ENCODE measurements at regions of chr15 and their contacts with region 1.

Region 1: GRCh38 chr15:60507596-60508424 is 28.9 kb upstream of the ICE2 start:
- DNase-seq: peak in 12 of 14 experiments; percentile 14 to 89 (median 43)
- ATAC-seq: peak; percentile 87
- H3K4me3 ChIP-seq: no peak overlapping the region
- H3K4me3 Mint-ChIP-seq: peak overlapping the region; percentile 1
- H3K27ac ChIP-seq: peak overlapping the region in 1 of 2 donors; percentile 14
- H3K27ac Mint-ChIP-seq: peak overlapping the region; percentile 84
- H3K4me1 ChIP-seq: peaks cover 19% of the 10 kb centered on the region
- H3K4me1 Mint-ChIP-seq: peaks cover 58% of the 10 kb centered on the region
- H3K27me3 ChIP-seq: no peaks in the 10 kb centered on the region
- H3K27me3 Mint-ChIP-seq: no peaks in the 10 kb centered on the region
- CTCF ChIP-seq: peak; percentile 87

Region 2: DNA sequence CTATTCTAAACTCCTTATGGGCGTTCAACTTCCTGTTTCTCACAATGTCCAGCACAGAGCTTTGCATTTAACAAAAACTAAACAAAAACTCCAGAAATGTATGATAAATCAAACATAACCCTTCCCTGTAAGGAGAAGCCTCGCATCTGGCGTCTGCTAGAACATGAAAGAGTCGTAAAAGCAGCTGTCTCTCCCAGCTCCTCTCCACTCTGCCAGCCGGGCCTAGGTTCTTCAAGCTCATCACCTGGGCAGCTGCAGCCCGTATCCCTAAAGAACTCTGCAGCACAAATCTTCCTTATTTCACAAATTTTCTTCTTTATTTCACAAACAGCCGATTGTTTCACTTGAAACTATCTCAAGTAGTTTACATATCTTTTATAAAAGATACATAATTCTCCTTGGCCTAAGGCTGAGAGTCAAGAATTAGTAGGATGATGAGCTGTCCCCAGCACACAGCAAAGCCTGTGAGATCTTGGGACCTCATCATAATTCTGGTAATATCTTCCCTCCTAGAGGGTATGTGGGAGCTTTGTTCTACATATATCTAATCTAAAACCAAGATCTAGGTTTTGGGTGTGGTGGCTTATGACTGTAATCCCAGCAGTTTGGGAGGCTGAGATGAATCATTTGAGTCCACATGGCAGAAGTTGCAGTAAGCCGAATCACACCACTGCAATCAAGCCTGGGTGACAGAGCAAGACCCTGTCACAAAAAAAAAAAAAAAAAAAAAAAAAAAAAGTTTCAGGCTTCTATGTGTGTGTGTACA is 145.3 kb before region 1 on chr15:
- CTCF ChIA-PET with region 1: no interaction called
- POLR2A ChIA-PET with region 1: no interaction called
- intact Hi-C with region 1: loop called in 1 of 2 experiments (anchors 5 kb)
- DNase-seq: peak in 5 of 14 experiments; percentile 6 to 50 (median 25)
- ATAC-seq: peak; percentile 75
- H3K4me3 ChIP-seq: no peak overlapping the region
- H3K4me3 Mint-ChIP-seq: no peak overlapping the region
- H3K27ac ChIP-seq: no peak overlapping the region
- H3K27ac Mint-ChIP-seq: peak overlapping the region; percentile 62
- H3K4me1 ChIP-seq: peaks cover 15% of the 10 kb centered on the region
- H3K4me1 Mint-ChIP-seq: peaks cover 19% of the 10 kb centered on the region
- H3K27me3 ChIP-seq: no peaks in the 10 kb centered on the region
- H3K27me3 Mint-ChIP-seq: no peaks in the 10 kb centered on the region
- CTCF ChIP-seq: no peak

Region 3: DNA sequence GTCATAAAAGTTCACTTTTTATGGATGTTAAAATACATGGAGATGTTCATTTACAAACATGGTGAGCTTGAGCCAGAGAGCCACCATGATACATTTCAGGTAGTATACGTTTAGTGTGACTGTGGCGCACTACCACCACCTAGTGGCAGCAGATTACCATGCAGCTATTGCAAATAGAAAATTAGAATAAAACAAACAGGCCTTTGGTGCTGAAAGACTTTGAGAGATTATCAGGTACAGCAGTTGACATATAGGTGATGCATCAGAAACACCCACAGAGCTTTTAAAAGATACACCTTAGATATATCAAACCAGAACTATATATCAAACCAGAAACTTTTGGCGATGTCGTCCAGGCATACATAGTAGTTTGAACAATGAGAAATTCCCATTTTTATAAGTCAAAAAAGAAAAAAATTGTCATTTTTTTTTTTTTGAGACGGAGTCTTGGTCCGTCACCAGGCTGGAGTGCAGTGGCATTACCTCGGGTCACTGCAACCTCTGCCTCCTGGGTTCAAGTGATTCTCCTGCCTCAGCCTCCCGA is 13.1 kb after region 1 on chr15:
- CTCF ChIA-PET with region 1: interaction called, 37 read pairs
- POLR2A ChIA-PET with region 1: interaction called, 22 read pairs
- intact Hi-C with region 1: loop called in 1 of 2 experiments (anchors 1 kb)
- DNase-seq: peak; percentile 68 to 89 (median 78)
- ATAC-seq: peak; percentile 88
- H3K4me3 ChIP-seq: no peak overlapping the region
- H3K4me3 Mint-ChIP-seq: no peak overlapping the region
- H3K27ac ChIP-seq: no peak overlapping the region
- H3K27ac Mint-ChIP-seq: peak overlapping the region; percentile 65
- H3K4me1 ChIP-seq: peaks cover 22% of the 10 kb centered on the region
- H3K4me1 Mint-ChIP-seq: peaks cover 66% of the 10 kb centered on the region
- H3K27me3 ChIP-seq: no peaks in the 10 kb centered on the region
- H3K27me3 Mint-ChIP-seq: no peaks in the 10 kb centered on the region
- CTCF ChIP-seq: peak; percentile 92

Region 4: DNA sequence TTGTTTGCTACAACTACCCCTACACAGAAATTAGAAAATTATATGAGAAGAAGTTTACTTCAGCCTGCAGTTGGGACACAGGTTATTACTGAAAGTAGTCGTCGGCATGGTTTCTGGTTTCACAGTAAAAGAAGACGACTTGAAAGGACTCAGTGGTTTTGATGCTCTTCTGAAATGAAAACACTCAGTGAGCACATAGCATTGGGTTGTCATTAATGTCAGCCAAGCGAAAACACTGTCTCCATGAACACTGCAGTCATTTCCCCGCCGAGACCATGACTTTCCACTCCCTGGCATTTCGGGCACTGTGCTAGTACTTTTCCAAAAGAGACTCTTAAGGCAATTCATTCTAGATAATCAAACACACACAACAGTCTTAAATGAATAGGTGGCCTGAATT is 40.3 kb after region 1 on chr15:
- CTCF ChIA-PET with region 1: interaction called, 8 read pairs
- POLR2A ChIA-PET with region 1: interaction called, 5 read pairs
- intact Hi-C with region 1: loop called in 1 of 2 experiments (anchors 5 kb)
- DNase-seq: peak in 5 of 14 experiments; percentile 34 to 69 (median 65)
- ATAC-seq: peak; percentile 57
- H3K4me3 ChIP-seq: peak overlapping the region; percentile 27
- H3K4me3 Mint-ChIP-seq: peak overlapping the region; percentile 71
- H3K27ac ChIP-seq: peak overlapping the region; percentile 2 to 65
- H3K27ac Mint-ChIP-seq: peak overlapping the region; percentile 85
- H3K4me1 ChIP-seq: peaks cover 74% of the 10 kb centered on the region
- H3K4me1 Mint-ChIP-seq: peaks cover 94% of the 10 kb centered on the region
- H3K27me3 ChIP-seq: no peaks in the 10 kb centered on the region
- H3K27me3 Mint-ChIP-seq: no peaks in the 10 kb centered on the region
- CTCF ChIP-seq: no peak

Region 5: DNA sequence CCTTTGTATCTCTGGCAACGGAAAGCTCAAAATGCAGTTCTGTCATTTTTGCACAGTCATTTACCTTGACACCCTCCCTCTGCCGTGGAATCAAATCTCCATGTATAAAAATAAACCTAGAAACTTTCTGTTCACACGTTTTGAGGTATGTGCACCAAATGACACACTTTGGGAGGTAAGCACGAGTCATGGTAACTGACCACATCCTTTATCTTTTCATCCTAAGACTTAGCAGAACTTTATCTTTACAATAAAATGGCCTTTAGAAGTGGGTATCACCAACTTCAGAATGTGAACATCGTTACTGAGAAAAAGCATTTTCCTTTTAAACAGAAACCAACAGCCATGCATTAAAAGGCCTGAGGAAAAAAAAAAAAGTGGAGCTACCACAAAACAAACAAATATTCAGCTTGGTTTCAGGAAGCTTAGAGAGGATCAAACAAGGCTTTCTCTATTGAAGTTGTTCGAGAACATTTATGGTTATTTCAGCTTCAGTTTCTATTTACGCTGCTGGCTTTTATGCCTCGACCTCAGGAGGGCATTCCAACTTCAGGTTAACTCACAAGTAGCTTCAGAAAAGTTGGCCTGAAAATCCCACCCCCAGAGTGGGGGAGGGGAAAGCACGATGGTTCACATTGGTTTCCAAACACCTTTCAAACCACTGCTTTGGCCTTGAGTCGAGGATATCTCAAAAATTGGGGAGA is 142.2 kb after region 1 on chr15:
- CTCF ChIA-PET with region 1: no interaction called
- POLR2A ChIA-PET with region 1: no interaction called
- intact Hi-C with region 1: no loop called
- DNase-seq: peak in 9 of 14 experiments; percentile 4 to 87 (median 11)
- ATAC-seq: peak; percentile 84
- H3K4me3 ChIP-seq: peak overlapping the region; percentile 15
- H3K4me3 Mint-ChIP-seq: peak overlapping the region; percentile 58
- H3K27ac ChIP-seq: peak overlapping the region in 1 of 2 donors; percentile 59
- H3K27ac Mint-ChIP-seq: peak overlapping the region; percentile 79
- H3K4me1 ChIP-seq: peaks cover 30% of the 10 kb centered on the region
- H3K4me1 Mint-ChIP-seq: peaks cover 46% of the 10 kb centered on the region
- H3K27me3 ChIP-seq: no peaks in the 10 kb centered on the region
- H3K27me3 Mint-ChIP-seq: no peaks in the 10 kb centered on the region
- CTCF ChIP-seq: no peak

Region 6: GRCh38 chr15:60859996-60860494 is 352.2 kb after region 1 on chr15:
- CTCF ChIA-PET with region 1: no interaction called
- POLR2A ChIA-PET with region 1: interaction called, 3 read pairs
- intact Hi-C with region 1: loop called (anchors 2 kb)
- DNase-seq: peak in 1 of 14 experiments; percentile 46
- ATAC-seq: no peak
- H3K4me3 ChIP-seq: no peak overlapping the region
- H3K4me3 Mint-ChIP-seq: no peak overlapping the region
- H3K27ac ChIP-seq: no peak overlapping the region
- H3K27ac Mint-ChIP-seq: no peak overlapping the region
- H3K4me1 ChIP-seq: no peaks in the 10 kb centered on the region
- H3K4me1 Mint-ChIP-seq: peaks cover 41% of the 10 kb centered on the region
- H3K27me3 ChIP-seq: no peaks in the 10 kb centered on the region
- H3K27me3 Mint-ChIP-seq: no peaks in the 10 kb centered on the region
- CTCF ChIP-seq: no peak

Region 7: GRCh38 chr15:61621146-61621545 is 1113.3 kb after region 1 on chr15:
- CTCF ChIA-PET with region 1: no interaction called
- POLR2A ChIA-PET with region 1: no interaction called
- intact Hi-C with region 1: loop called in 1 of 2 experiments (anchors 5 kb)
- DNase-seq: peak in 1 of 14 experiments; percentile 5
- ATAC-seq: no peak
- H3K4me3 ChIP-seq: no peak overlapping the region
- H3K4me3 Mint-ChIP-seq: no peak overlapping the region
- H3K27ac ChIP-seq: no peak overlapping the region
- H3K27ac Mint-ChIP-seq: no peak overlapping the region
- H3K4me1 ChIP-seq: no peaks in the 10 kb centered on the region
- H3K4me1 Mint-ChIP-seq: no peaks in the 10 kb centered on the region
- H3K27me3 ChIP-seq: no peaks in the 10 kb centered on the region
- H3K27me3 Mint-ChIP-seq: peaks cover 11% of the 10 kb centered on the region
- CTCF ChIP-seq: no peak

Region 8: GRCh38 chr15:61834076-61834697 is 1326.4 kb after region 1 on chr15:
- CTCF ChIA-PET with region 1: no interaction called
- POLR2A ChIA-PET with region 1: no interaction called
- intact Hi-C with region 1: loop called in 1 of 2 experiments (anchors 1 kb)
- DNase-seq: peak; percentile 48 to 81 (median 66)
- ATAC-seq: peak; percentile 89
- H3K4me3 ChIP-seq: no peak overlapping the region
- H3K4me3 Mint-ChIP-seq: no peak overlapping the region
- H3K27ac ChIP-seq: no peak overlapping the region
- H3K27ac Mint-ChIP-seq: no peak overlapping the region
- H3K4me1 ChIP-seq: peaks cover 10% of the 10 kb centered on the region
- H3K4me1 Mint-ChIP-seq: peaks cover 6% of the 10 kb centered on the region
- H3K27me3 ChIP-seq: peaks cover 12% of the 10 kb centered on the region in 2 experiments
- H3K27me3 Mint-ChIP-seq: peaks cover 41% of the 10 kb centered on the region
- CTCF ChIP-seq: peak; percentile 96

Measured in CD4-positive, alpha-beta T cell (primary cell).